ENCODE measurements at regions of chr5 and their contacts with region 1.

Region 1: DNA sequence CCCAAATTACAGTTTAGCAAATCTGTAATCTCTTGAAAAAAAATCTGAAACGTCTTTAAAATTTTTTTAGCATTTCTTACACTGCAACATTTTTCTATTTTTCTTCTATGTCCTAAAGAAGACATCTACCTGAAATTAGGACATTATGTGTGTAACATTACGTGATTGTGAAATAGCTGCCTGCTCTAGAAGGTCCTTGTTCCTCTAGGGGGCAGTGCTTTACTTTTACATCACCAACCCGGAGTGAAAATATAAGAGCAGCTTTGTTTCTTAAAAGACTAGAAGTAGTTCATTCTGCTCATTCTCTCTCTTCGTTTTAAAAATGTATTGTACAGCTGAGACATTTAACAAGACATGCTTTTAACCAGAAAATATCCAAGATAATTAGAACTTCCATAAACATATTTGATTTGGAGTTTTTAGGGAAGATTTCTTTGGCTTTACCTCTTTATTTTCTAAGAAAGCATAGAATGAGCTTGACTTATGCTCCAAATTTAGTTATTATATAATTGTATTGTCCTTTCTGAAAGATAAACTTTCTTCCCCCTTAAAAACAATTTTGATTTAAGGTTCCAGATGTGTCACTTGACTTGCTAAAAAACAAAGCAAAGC is 48.1 kb upstream of the RIOK2 start:
- DNase-seq: peak; percentile 64
- H3K4me3 ChIP-seq: no peak overlapping the region
- H3K27ac ChIP-seq: no peak overlapping the region
- H3K4me1 ChIP-seq: no peaks in the 10 kb centered on the region
- H3K27me3 ChIP-seq: no peaks in the 10 kb centered on the region
- CTCF ChIP-seq: peak; percentile 27 to 69 (median 58)
- EP300 ChIP-seq: no peak
- POLR2A ChIP-seq: no peak

Region 2: DNA sequence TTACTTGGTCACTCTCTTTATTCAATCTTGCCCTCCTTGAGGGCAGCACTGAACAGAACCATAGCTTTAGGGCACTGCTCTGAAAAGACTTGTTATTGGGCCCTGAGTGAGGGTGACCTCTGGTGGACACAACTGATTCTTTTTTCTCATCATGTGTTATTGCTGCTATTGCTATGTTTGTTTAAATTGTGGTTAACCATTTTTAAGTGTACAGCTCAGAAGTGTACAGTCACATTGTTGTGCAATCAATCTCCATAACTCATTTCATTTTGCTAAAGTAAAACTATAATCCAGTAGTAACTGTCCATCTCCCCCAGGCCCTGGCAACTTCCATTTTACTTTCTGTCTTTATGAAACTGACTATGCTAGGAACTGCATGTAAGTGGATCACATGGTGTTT is 303.0 kb after region 1 on chr5:
- intact Hi-C with region 1: loop called (anchors 5 kb)
- DNase-seq: no peak
- H3K4me3 ChIP-seq: no peak overlapping the region
- H3K27ac ChIP-seq: no peak overlapping the region
- H3K4me1 ChIP-seq: no peaks in the 10 kb centered on the region
- H3K27me3 ChIP-seq: no peaks in the 10 kb centered on the region
- CTCF ChIP-seq: peak in 2 of 4 experiments; percentile 22 to 40
- EP300 ChIP-seq: no peak
- POLR2A ChIP-seq: no peak

Region 3: GRCh38 chr5:98796197-98796972 is 1565.3 kb after region 1 on chr5:
- intact Hi-C with region 1: loop called (anchors 2 kb)
- DNase-seq: no peak
- H3K4me3 ChIP-seq: no peak overlapping the region
- H3K27ac ChIP-seq: peak overlapping the region in 1 of 4 donors; percentile 38
- H3K4me1 ChIP-seq: peaks cover 0 to 13% (median 5%) of the 10 kb centered on the region in 4 donors
- H3K27me3 ChIP-seq: no peaks in the 10 kb centered on the region
- CTCF ChIP-seq: peak in 3 of 4 experiments; percentile 72 to 86 (median 85)
- EP300 ChIP-seq: no peak
- POLR2A ChIP-seq: no peak

Region 4: GRCh38 chr5:98827161-98827560 is 1596.0 kb after region 1 on chr5:
- intact Hi-C with region 1: loop called (anchors 10 kb)
- DNase-seq: no peak
- H3K4me3 ChIP-seq: no peak overlapping the region
- H3K27ac ChIP-seq: no peak overlapping the region
- H3K4me1 ChIP-seq: no peaks in the 10 kb centered on the region
- H3K27me3 ChIP-seq: no peaks in the 10 kb centered on the region
- CTCF ChIP-seq: peak in 3 of 4 experiments; percentile 25 to 52 (median 29)
- EP300 ChIP-seq: no peak
- POLR2A ChIP-seq: no peak

Measured in sigmoid colon (tissue), 7 donors.